Uterus (tissue), 4 donors: ENCODE measurements at regions of chr18 and their contacts with region 1.

Region 1: GRCh38 chr18:2192569-2192968 is 378.7 kb downstream of the METTL4 start:
- DNase-seq: no peak
- H3K4me3 ChIP-seq: no peak overlapping the region
- H3K27ac ChIP-seq: no peak overlapping the region
- H3K4me1 ChIP-seq: no peaks in the 10 kb centered on the region
- H3K27me3 ChIP-seq: no peaks in the 10 kb centered on the region
- CTCF ChIP-seq: no peak
- POLR2A ChIP-seq: no peak

Region 2: GRCh38 chr18:2139691-2140090 is 52.9 kb before region 1 on chr18:
- intact Hi-C with region 1: no loop called
- DNase-seq: no peak
- H3K4me3 ChIP-seq: no peak overlapping the region
- H3K27ac ChIP-seq: no peak overlapping the region
- H3K4me1 ChIP-seq: no peaks in the 10 kb centered on the region
- H3K27me3 ChIP-seq: no peaks in the 10 kb centered on the region
- CTCF ChIP-seq: no peak
- POLR2A ChIP-seq: no peak

Region 3: DNA sequence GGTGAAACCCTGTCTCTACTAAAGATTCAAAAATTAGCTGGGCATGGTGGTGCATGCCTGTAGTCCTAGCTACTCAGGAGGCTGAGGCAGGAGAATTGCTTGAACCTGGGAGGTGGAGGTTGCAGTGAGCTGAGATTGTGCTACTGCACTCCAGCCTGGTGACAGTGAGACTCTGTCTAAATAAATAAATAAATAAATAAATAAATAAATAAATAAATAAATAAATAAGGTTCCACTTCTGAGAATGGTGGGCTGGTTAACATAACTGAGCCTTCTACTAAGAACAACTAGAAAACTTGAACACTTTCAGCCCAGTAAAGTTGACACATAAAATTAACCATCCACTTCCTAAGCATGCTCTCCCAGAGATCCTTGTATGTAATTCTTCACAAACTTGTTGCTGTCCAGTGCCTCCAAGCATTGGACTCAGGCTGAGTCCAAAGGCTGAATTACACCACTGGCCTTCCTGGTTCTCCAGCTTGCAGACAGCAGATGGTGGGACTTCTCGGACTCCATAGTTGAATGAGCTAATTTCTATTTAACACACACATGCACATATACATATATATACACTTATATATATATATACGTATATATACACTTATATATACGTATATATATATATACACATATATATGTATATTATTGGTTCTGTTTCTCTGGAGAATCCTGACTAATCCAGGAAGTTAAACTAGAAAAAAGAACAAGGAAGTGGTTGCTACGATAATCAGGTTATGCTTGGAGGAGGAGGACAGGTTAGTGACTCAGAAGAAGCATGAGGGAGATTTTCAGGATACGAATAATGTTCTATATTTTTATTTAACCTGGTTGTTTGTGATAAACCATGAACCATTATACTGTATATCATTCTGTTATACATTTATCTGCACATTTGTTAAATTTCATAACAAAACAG is 30.0 kb after region 1 on chr18:
- intact Hi-C with region 1: loop called (anchors 1 kb)
- DNase-seq: no peak
- H3K4me3 ChIP-seq: no peak overlapping the region
- H3K27ac ChIP-seq: no peak overlapping the region
- H3K4me1 ChIP-seq: no peaks in the 10 kb centered on the region
- H3K27me3 ChIP-seq: no peaks in the 10 kb centered on the region
- CTCF ChIP-seq: no peak
- POLR2A ChIP-seq: no peak